Heart left ventricle (tissue), 16 donors: ENCODE measurements at regions of chr21 and their contacts with region 1.

Region 1: GRCh38 chr21:45140346-45140940 is 66.1 kb downstream of the ADARB1 start:
- DNase-seq: peak; percentile 62 to 83 (median 76)
- ATAC-seq: peak; percentile 75 to 86 (median 86)
- H3K4me3 ChIP-seq: no peak overlapping the region
- H3K27ac ChIP-seq: no peak overlapping the region
- H3K4me1 ChIP-seq: peaks cover 0 to 26% (median 4%) of the 10 kb centered on the region in 12 donors
- H3K27me3 ChIP-seq: no peaks in the 10 kb centered on the region
- CTCF ChIP-seq: peak; percentile 61 to 81 (median 74)
- POLR2A ChIP-seq: no peak

Region 2: GRCh38 chr21:44817506-44817880 is 322.9 kb before region 1 on chr21:
- intact Hi-C with region 1: loop called in 2 of 10 experiments (anchors 10 kb)
- DNase-seq: peak; percentile 93 to 98 (median 93)
- ATAC-seq: peak; percentile 90 to 98 (median 93)
- H3K4me3 ChIP-seq: peak overlapping the region; percentile 72 to 97 (median 88)
- H3K27ac ChIP-seq: peak overlapping the region; percentile 85 to 99 (median 96)
- H3K4me1 ChIP-seq: peaks cover 0 to 39% (median 24%) of the 10 kb centered on the region in 12 donors
- H3K27me3 ChIP-seq: no peaks in the 10 kb centered on the region
- CTCF ChIP-seq: no peak
- POLR2A ChIP-seq: no peak

Region 3: GRCh38 chr21:44892536-44893277 is 247.7 kb before region 1 on chr21:
- intact Hi-C with region 1: loop called in 5 of 10 experiments (anchors 5 kb)
- DNase-seq: peak in 4 of 5 donors; percentile 63 to 87 (median 68)
- ATAC-seq: peak in 3 of 4 donors; percentile 58 to 79 (median 73)
- H3K4me3 ChIP-seq: no peak overlapping the region
- H3K27ac ChIP-seq: no peak overlapping the region
- H3K4me1 ChIP-seq: peaks cover 0 to 9% (median 0%) of the 10 kb centered on the region in 12 donors
- H3K27me3 ChIP-seq: no peaks in the 10 kb centered on the region
- CTCF ChIP-seq: peak; percentile 77 to 88 (median 86)
- POLR2A ChIP-seq: no peak

Region 4: GRCh38 chr21:45209046-45209445 is 68.6 kb after region 1 on chr21:
- intact Hi-C with region 1: loop called in 1 of 10 experiments (anchors 10 kb)
- DNase-seq: no peak
- ATAC-seq: no peak
- H3K4me3 ChIP-seq: no peak overlapping the region
- H3K27ac ChIP-seq: no peak overlapping the region
- H3K4me1 ChIP-seq: peaks cover 0 to 12% (median 0%) of the 10 kb centered on the region in 12 donors
- H3K27me3 ChIP-seq: no peaks in the 10 kb centered on the region
- CTCF ChIP-seq: no peak
- POLR2A ChIP-seq: no peak

Region 5: DNA sequence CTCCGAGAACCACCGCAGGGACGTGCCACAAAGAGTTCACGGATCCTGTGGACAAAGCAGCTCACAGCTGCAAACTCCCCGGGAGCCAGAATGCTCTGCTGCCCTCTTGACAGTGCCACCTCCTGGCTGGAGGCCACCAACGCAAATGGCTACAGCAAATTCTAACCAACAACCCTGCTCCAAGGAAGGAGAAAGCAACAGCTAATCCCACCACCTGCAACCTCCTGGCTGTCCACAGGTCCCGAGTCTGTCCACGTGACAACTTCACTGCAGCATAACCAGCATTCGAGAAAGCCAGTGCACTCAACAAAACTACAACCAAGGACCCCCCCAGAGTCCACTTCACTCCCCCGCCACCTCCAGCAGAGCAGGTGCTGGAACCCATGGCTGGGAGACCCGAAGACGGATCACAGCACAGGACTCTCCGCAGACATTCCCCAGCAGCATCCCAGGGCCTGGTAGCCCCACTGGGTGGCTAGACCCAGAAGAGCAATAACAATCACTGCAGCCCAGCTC is 129.9 kb after region 1 on chr21:
- intact Hi-C with region 1: loop called in 1 of 10 experiments (anchors 10 kb)
- DNase-seq: peak in 1 of 5 donors; percentile 36
- ATAC-seq: no peak
- H3K4me3 ChIP-seq: no peak overlapping the region
- H3K27ac ChIP-seq: no peak overlapping the region
- H3K4me1 ChIP-seq: peaks cover 0 to 4% (median 0%) of the 10 kb centered on the region in 12 donors
- H3K27me3 ChIP-seq: no peaks in the 10 kb centered on the region
- CTCF ChIP-seq: peak in 1 of 12 donors; percentile 7
- POLR2A ChIP-seq: no peak

Region 6: DNA sequence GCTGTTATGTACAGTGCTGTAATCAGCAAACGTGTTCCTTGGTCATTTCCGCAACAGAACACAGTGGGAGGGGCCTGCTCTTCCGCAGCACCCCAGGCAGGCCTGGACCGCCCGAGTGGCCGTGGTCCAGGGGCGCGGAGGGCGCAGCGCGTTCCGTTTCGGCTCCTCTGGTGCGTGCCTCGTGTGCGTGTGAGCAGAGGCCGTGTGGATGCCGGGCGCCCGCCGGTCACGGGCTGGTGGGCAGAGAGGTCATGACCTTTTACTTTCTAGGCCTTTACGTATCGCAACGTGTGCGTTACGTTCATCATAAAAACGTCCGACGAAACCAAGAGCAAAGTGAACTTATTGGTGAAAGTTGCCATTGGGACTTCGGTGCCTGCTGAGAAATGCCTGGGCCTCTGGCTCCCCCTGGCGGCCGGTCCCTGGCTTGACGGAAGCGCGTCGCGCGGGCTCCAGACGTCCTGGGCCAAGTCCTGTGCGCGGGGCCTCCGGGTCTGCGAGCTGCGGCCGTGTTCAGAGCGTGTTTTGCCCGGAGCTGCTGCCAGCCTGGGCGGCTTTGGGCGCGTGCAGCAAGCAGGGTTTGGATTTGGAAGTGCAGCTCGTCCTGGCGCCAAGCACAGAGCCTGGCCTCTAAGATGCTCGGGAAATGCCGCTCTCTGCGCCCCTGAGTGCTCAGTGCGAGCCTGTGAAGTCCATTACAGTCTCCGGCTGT is 298.9 kb after region 1 on chr21:
- intact Hi-C with region 1: loop called in 7 of 10 experiments (anchors 2 to 10 kb)
- DNase-seq: peak; percentile 79 to 91 (median 84)
- ATAC-seq: peak; percentile 71 to 88 (median 82)
- H3K4me3 ChIP-seq: peak overlapping the region in 11 of 12 donors; percentile 2 to 58 (median 43)
- H3K27ac ChIP-seq: peak overlapping the region; percentile 56 to 91 (median 80)
- H3K4me1 ChIP-seq: peaks cover 3 to 30% (median 16%) of the 10 kb centered on the region in 12 donors
- H3K27me3 ChIP-seq: no peaks in the 10 kb centered on the region
- CTCF ChIP-seq: peak; percentile 95 to 99 (median 98)
- POLR2A ChIP-seq: peak in 1 of 2 donors; percentile 42

Region 7: GRCh38 chr21:45820171-45821091 is 680.0 kb after region 1 on chr21:
- intact Hi-C with region 1: loop called in 4 of 10 experiments (anchors 2 to 5 kb)
- DNase-seq: peak; percentile 67 to 85 (median 69)
- ATAC-seq: peak; percentile 77 to 90 (median 86)
- H3K4me3 ChIP-seq: no peak overlapping the region
- H3K27ac ChIP-seq: no peak overlapping the region
- H3K4me1 ChIP-seq: peaks cover 0 to 5% (median 0%) of the 10 kb centered on the region in 12 donors
- H3K27me3 ChIP-seq: no peaks in the 10 kb centered on the region
- CTCF ChIP-seq: peak; percentile 69 to 84 (median 78)
- POLR2A ChIP-seq: no peak